ENCODE measurements at regions of chr18 and their contacts with region 1.

Region 1: DNA sequence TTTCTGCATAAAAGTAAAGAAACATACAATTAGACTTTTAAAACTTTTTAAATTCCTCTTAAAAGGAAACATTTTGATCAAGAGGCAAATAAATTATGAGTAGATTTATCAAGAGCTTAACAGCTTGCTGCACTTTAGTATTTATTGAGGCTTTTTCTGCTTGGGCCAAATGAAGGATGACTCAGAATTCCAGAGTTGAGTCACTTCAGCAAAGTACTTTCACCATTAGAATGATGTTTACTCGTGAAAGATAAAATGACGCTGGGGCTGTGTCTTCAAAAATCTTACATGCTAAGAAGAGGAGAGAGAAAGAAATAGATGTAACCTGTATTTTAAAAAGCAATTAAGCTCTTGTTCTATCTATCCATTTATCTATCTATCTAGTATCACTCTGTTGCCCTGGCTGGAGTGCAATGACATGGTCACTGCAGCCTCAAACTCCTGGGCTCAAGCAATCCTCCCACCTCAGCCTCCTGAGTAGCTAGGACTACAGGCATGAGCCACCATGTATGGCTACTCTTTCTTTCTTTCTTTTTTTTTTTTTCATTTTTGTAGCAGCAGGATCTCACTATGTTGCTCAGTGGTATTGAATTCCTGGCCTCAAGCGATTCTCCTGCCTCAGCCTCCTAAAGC is 75.3 kb upstream of the RIOK3 start:
- DNase-seq: no peak
- ATAC-seq: no peak
- H3K4me3 ChIP-seq: no peak overlapping the region
- H3K27ac ChIP-seq: peak overlapping the region; percentile 32
- H3K4me1 ChIP-seq: peaks cover 6% of the 10 kb centered on the region
- H3K27me3 ChIP-seq: no peaks in the 10 kb centered on the region
- CTCF ChIP-seq: no peak

Region 2: DNA sequence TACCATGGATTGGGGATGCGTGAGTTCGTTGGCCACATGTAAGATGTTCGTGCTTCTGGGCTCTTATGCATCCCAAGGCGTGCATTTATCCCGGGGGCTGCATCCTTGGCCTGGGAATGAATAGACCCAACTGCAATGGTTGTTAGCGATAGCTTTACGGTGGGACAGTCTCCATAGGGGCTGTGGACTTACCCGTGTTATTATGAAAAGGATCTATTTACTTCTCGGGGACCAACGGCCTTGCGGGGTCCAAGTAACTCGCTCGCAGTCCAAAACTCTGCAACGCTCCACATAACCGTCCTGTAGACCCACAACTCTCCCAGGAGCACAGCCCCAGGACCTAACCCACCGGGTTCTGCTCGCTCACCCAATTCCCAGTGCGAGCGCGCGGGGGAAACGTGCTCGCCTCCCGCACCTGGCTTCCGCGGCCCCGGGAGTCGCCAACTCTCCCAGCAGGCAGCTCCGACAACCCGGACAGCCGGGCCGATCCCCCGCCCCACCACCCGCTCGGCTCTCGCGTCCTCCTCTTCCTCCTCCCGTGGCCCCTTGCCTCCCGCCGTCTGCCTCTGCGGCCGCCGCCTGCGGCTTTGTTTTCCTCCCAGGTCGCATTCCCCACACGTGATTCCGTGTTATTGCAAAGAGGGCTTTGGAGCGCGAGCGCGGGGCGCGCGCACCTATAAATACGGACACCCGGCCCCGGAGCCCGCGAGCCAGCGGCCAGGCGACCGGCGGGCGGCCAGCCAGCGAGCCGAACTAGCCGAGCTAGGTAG is 242.8 kb before region 1 on chr18 and contains the start of gene CABLES1:
- intact Hi-C with region 1: loop called (anchors 5 kb)
- DNase-seq: peak; percentile 89
- ATAC-seq: peak; percentile 39
- H3K4me3 ChIP-seq: peak within 1 kb of the TSS; percentile 69
- H3K27ac ChIP-seq: peak within 1 kb of the TSS; percentile 81
- H3K4me1 ChIP-seq: peaks cover 16% of the 10 kb centered on the region
- H3K27me3 ChIP-seq: no peaks in the 10 kb centered on the region
- CTCF ChIP-seq: no peak
- total RNA-seq, gene CABLES1: 39.5 TPM

Region 3: GRCh38 chr18:23311351-23312121 is 66.2 kb before region 1 on chr18:
- intact Hi-C with region 1: loop called (anchors 10 kb)
- DNase-seq: no peak
- ATAC-seq: no peak
- H3K4me3 ChIP-seq: no peak overlapping the region
- H3K27ac ChIP-seq: no peak overlapping the region
- H3K4me1 ChIP-seq: no peaks in the 10 kb centered on the region
- H3K27me3 ChIP-seq: no peaks in the 10 kb centered on the region
- CTCF ChIP-seq: no peak

Region 4: GRCh38 chr18:23438608-23439366 is 61.0 kb after region 1 on chr18:
- intact Hi-C with region 1: no loop called
- DNase-seq: no peak
- ATAC-seq: no peak
- H3K4me3 ChIP-seq: no peak overlapping the region
- H3K27ac ChIP-seq: no peak overlapping the region
- H3K4me1 ChIP-seq: no peaks in the 10 kb centered on the region
- H3K27me3 ChIP-seq: no peaks in the 10 kb centered on the region
- CTCF ChIP-seq: no peak

Region 5: GRCh38 chr18:23487738-23488570 is 110.2 kb after region 1 on chr18:
- intact Hi-C with region 1: no loop called
- DNase-seq: peak; percentile 73
- ATAC-seq: peak; percentile 78
- H3K4me3 ChIP-seq: peak overlapping the region; percentile 33
- H3K27ac ChIP-seq: peak overlapping the region; percentile 73
- H3K4me1 ChIP-seq: peaks cover 8% of the 10 kb centered on the region
- H3K27me3 ChIP-seq: no peaks in the 10 kb centered on the region
- CTCF ChIP-seq: no peak